Motor neuron (in vitro differentiated cells): ENCODE measurements at regions of chr14 and their contacts with region 1.

Region 1: GRCh38 chr14:34678306-34678705 is 36.1 kb downstream of the CFL2 start:
- ATAC-seq: peak; percentile 48 to 75 (median 66)
- H3K4me3 ChIP-seq: no peak overlapping the region
- H3K27ac ChIP-seq: no peak overlapping the region
- H3K4me1 ChIP-seq: peaks cover 7 to 9% of the 10 kb centered on the region in 2 donors

Region 2: GRCh38 chr14:34619471-34619870 is 58.8 kb before region 1 on chr14:
- in situ Hi-C with region 1: no loop called
- ATAC-seq: no peak
- H3K4me3 ChIP-seq: no peak overlapping the region
- H3K27ac ChIP-seq: no peak overlapping the region
- H3K4me1 ChIP-seq: no peaks in the 10 kb centered on the region

Region 3: DNA sequence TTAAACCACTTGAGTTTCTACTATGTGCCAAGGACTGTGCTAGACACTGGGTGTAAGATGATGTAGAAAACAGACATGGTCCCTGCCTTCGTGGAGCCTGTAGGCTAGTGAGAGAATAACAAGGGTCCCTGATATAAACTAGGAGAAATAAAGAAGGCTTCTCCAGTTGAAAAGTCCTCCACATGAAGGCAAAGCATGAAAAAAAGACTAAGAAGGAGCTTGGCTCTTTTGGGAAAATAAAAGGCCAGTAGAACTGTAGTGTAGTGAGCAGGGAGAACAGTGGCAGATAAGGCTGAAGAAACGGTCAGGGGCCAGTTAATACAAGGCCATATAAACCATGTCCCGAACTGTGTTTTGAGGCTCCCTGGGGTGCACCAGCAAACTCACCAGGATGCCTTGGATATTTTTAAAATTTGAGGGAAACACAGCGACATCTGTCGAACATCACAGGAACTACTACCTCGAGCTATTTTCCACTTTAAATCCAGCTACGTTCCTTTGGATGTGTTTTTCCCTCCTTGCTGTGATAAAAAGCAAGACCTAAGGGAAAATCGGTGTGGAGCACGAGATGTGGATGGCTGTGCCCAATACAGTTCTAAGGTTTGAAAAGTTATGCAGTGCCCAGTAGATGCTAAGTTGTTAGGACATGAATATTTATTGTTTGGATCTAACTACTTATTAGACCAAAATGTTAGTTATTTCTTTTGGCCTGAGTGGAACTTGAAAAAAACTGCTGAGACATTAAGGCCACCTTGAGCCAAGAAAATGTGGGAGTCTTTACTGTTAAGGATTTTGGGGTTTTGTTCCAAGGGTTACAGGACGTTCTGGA is 44.6 kb after region 1 on chr14:
- in situ Hi-C with region 1: loop called in 1 of 9 experiments (anchors 10 kb)
- ATAC-seq: peak; percentile 25 to 68 (median 42)
- H3K4me3 ChIP-seq: no peak overlapping the region
- H3K27ac ChIP-seq: no peak overlapping the region
- H3K4me1 ChIP-seq: no peaks in the 10 kb centered on the region